Activated CD4-positive, alpha-beta T cell treated with anti-CD3 and anti-CD28 coated beads for 36 hours (primary cell): ENCODE measurements at regions of chr11 and their contacts with region 1.

Region 1: DNA sequence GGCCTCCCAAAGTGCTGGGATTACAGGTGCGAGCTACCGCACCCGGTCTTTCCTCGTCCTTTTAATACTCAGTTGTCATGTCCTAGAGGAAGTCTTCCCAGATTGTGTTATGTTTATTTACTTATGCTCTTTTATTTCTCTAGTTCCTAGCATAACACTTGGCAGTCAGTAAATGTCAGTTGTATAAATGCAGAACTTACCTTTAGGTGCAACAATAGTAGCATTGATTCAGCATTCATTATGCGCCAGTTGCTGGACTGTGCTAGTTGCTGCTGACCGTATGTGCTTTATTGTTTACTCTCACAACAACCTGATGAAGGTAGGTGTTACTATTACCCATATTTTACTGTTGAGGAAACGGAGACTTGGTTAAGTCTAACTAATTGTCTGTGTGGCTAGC is 20.8 kb downstream of the QSER1 start:
- DNase-seq: no peak
- ATAC-seq: no peak
- H3K4me3 Mint-ChIP-seq: no peak overlapping the region
- H3K27ac Mint-ChIP-seq: no peak overlapping the region
- H3K4me1 Mint-ChIP-seq: peaks cover 21% of the 10 kb centered on the region
- H3K27me3 Mint-ChIP-seq: no peaks in the 10 kb centered on the region

Region 2: GRCh38 chr11:32899438-32899837 is 14.0 kb before region 1 on chr11:
- CTCF ChIA-PET with region 1: no interaction called
- POLR2A ChIA-PET with region 1: no interaction called
- intact Hi-C with region 1: loop called in 1 of 2 experiments (anchors 1 kb)
- DNase-seq: no peak
- ATAC-seq: no peak
- H3K4me3 Mint-ChIP-seq: no peak overlapping the region
- H3K27ac Mint-ChIP-seq: no peak overlapping the region
- H3K4me1 Mint-ChIP-seq: peaks cover 37% of the 10 kb centered on the region
- H3K27me3 Mint-ChIP-seq: no peaks in the 10 kb centered on the region